Ascending aorta (tissue), 2 donors: ENCODE measurements at regions of chr6 and their contacts with region 1.

Region 1: GRCh38 chr6:159693128-159693893 is at the start of gene SOD2:
- DNase-seq: peak in 1 of 2 donors; percentile 90
- H3K4me3 ChIP-seq: peak within 1 kb of the TSS; percentile 74 to 97
- H3K27ac ChIP-seq: peak within 1 kb of the TSS; percentile 89 to 94
- H3K4me1 ChIP-seq: peaks cover 5 to 8% of the 10 kb centered on the region in 2 donors
- H3K27me3 ChIP-seq: no peaks in the 10 kb centered on the region
- CTCF ChIP-seq: no peak
- total RNA-seq, gene SOD2: 205 TPM

Region 2: GRCh38 chr6:159665868-159666635 is 27.3 kb before region 1 on chr6:
- intact Hi-C with region 1: no loop called
- DNase-seq: no peak
- H3K4me3 ChIP-seq: no peak overlapping the region
- H3K27ac ChIP-seq: no peak overlapping the region
- H3K4me1 ChIP-seq: no peaks in the 10 kb centered on the region
- H3K27me3 ChIP-seq: no peaks in the 10 kb centered on the region
- CTCF ChIP-seq: no peak

Region 3: DNA sequence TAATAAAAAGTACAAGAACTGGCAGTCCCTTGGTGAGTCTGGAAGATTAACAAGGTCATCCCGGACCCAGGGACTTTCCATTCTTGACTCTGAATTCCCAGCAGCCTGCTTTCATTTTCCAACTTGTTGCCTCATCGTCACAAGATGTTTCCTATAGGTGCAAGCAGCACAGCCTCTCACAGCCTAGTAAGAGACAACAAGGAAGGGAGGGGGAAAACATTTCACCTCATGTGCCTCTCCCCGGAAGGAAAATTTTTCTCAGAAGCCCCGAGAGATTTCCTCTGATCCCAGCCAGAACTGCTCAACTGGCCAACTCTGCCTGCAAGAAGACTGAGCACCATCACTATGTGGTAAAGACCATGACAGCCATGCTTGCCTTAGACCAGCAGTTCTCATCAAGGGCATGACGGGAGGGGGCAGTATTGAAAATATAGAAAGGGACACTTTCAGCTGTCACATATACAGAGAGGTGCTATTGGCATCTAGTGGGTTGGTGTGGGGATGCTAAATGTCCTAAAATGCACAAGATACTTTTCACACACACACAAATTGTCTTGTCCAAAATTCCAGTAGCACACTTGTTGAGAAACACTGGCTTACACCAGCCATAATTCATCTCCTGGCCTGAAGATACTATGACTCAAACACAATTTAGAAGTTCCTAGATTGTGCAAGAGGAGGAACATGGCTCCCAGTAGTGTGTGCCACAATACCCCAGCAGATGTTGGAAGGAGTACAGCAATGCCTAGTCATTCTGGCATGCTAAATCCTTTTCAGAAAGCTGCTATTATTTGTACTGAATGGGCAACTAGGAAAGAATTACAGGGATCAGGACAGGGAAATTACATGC is 23.2 kb after region 1 on chr6:
- intact Hi-C with region 1: loop called (anchors 1 kb)
- DNase-seq: peak in 1 of 2 donors; percentile 87
- H3K4me3 ChIP-seq: peak overlapping the region; percentile 11 to 18
- H3K27ac ChIP-seq: peak overlapping the region; percentile 66 to 85
- H3K4me1 ChIP-seq: peaks cover 6 to 15% of the 10 kb centered on the region in 2 donors
- H3K27me3 ChIP-seq: no peaks in the 10 kb centered on the region
- CTCF ChIP-seq: no peak

Region 4: GRCh38 chr6:159726918-159727716 is 33.8 kb after region 1 on chr6 and contains the start of gene WTAP:
- intact Hi-C with region 1: loop called (anchors 1 kb)
- DNase-seq: peak; percentile 87 to 97
- H3K4me3 ChIP-seq: peak within 1 kb of the TSS; percentile 95 to 100
- H3K27ac ChIP-seq: peak within 1 kb of the TSS; percentile 98 to 100
- H3K4me1 ChIP-seq: peaks cover 6 to 25% of the 10 kb centered on the region in 2 donors
- H3K27me3 ChIP-seq: no peaks in the 10 kb centered on the region
- CTCF ChIP-seq: no peak
- total RNA-seq, gene WTAP: 44.6 TPM

Region 5: GRCh38 chr6:159761873-159762680 is 68.8 kb after region 1 on chr6 and contains the start of gene ACAT2:
- intact Hi-C with region 1: loop called (anchors 1 kb)
- DNase-seq: peak; percentile 89 to 98
- H3K4me3 ChIP-seq: peak within 1 kb of the TSS; percentile 80 to 99
- H3K27ac ChIP-seq: peak within 1 kb of the TSS; percentile 96 to 99
- H3K4me1 ChIP-seq: peaks cover 5 to 11% of the 10 kb centered on the region in 2 donors
- H3K27me3 ChIP-seq: no peaks in the 10 kb centered on the region
- CTCF ChIP-seq: peak in 1 of 3 experiments; percentile 18
- total RNA-seq, gene ACAT2: 0.85 TPM

Region 6: DNA sequence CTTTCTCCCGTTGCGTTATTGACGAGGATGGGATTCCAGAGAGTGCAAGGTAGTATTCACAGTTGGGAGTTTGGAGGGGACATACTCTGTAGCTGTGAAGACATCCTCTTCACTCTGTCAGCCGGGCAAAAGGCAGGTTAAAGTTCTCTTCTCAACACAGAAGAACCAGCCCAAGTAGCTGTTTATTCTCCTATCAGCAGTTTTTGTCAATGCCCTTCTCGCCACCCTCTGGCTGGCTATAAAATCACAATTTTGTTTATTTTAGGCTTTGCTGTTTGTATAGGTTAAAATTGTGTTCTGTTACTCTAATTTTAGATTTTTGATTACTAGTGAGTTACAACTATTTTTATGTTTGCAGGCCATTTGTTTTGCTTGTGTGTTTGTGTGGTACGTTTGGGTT is 159.6 kb after region 1 on chr6:
- intact Hi-C with region 1: loop called (anchors 10 kb)
- DNase-seq: no peak
- H3K4me3 ChIP-seq: no peak overlapping the region
- H3K27ac ChIP-seq: peak overlapping the region in 1 of 2 donors; percentile 36
- H3K4me1 ChIP-seq: peaks cover 0 to 11% of the 10 kb centered on the region in 2 donors
- H3K27me3 ChIP-seq: no peaks in the 10 kb centered on the region
- CTCF ChIP-seq: peak in 1 of 3 experiments; percentile 14

Region 7: GRCh38 chr6:159941286-159942113 is 248.2 kb after region 1 on chr6:
- intact Hi-C with region 1: loop called (anchors 5 kb)
- DNase-seq: no peak
- H3K4me3 ChIP-seq: no peak overlapping the region
- H3K27ac ChIP-seq: no peak overlapping the region
- H3K4me1 ChIP-seq: peaks cover 6 to 25% of the 10 kb centered on the region in 2 donors
- H3K27me3 ChIP-seq: no peaks in the 10 kb centered on the region
- CTCF ChIP-seq: peak; percentile 38 to 66 (median 53)